ENCODE measurements at regions of chr10 and their contacts with region 1.

Region 1: GRCh38 chr10:67666416-67667034 is 29.5 kb downstream of the CTNNA3 start:
- DNase-seq: no peak
- H3K4me3 ChIP-seq: no peak overlapping the region
- H3K27ac ChIP-seq: no peak overlapping the region
- H3K4me1 ChIP-seq: no peaks in the 10 kb centered on the region
- H3K27me3 ChIP-seq: no peaks in the 10 kb centered on the region
- CTCF ChIP-seq: peak in 1 of 3 experiments; percentile 23
- POLR2A ChIP-seq: no peak

Region 2: DNA sequence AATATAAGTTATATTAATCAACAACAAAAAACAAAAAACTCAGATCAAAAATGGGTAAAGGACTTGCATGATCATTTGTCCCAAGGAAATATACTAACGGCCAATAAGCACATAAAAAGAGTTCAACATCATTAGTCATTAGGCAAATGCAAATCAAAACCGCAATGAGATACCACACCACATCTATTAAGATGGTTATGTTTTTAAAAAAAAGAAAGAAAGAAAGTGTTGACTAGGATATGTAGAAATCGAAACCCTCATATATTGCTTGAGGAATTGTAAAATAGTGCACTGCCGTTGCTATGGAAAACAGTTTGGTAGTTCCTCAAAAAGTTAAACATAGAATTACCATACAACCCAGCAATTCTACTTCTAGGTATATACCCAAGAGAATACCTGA is 68.9 kb after region 1 on chr10:
- intact Hi-C with region 1: no loop called
- DNase-seq: no peak
- H3K4me3 ChIP-seq: no peak overlapping the region
- H3K27ac ChIP-seq: no peak overlapping the region
- H3K4me1 ChIP-seq: no peaks in the 10 kb centered on the region
- H3K27me3 ChIP-seq: no peaks in the 10 kb centered on the region
- CTCF ChIP-seq: no peak
- POLR2A ChIP-seq: no peak

Region 3: GRCh38 chr10:67779465-67780203 is 113.1 kb after region 1 on chr10:
- intact Hi-C with region 1: loop called (anchors 10 kb)
- DNase-seq: no peak
- H3K4me3 ChIP-seq: no peak overlapping the region
- H3K27ac ChIP-seq: no peak overlapping the region
- H3K4me1 ChIP-seq: no peaks in the 10 kb centered on the region
- H3K27me3 ChIP-seq: no peaks in the 10 kb centered on the region
- CTCF ChIP-seq: peak; percentile 70 to 85 (median 80)
- POLR2A ChIP-seq: no peak

Region 4: GRCh38 chr10:68543004-68543918 is 876.7 kb after region 1 on chr10:
- intact Hi-C with region 1: no loop called
- DNase-seq: no peak
- H3K4me3 ChIP-seq: no peak overlapping the region
- H3K27ac ChIP-seq: no peak overlapping the region
- H3K4me1 ChIP-seq: no peaks in the 10 kb centered on the region
- H3K27me3 ChIP-seq: no peaks in the 10 kb centered on the region
- CTCF ChIP-seq: no peak
- POLR2A ChIP-seq: no peak